Naive thymus-derived CD4-positive, alpha-beta T cell (primary cell): ENCODE measurements at regions of chr19 and their contacts with region 1.

Region 1: GRCh38 chr19:48321622-48322591 is 3.4 kb upstream of the EMP3 start:
- DNase-seq: peak; percentile 99 to 100 (median 100)
- ATAC-seq: peak; percentile 87
- H3K4me3 ChIP-seq: peak overlapping the region; percentile 79
- H3K4me3 Mint-ChIP-seq: peak overlapping the region; percentile 90 to 99 (median 96)
- H3K27ac ChIP-seq: peak overlapping the region; percentile 100
- H3K27ac Mint-ChIP-seq: peak overlapping the region; percentile 96 to 100 (median 99)
- H3K4me1 ChIP-seq: peaks cover 45 to 47% of the 10 kb centered on the region in 2 donors
- H3K4me1 Mint-ChIP-seq: peaks cover 36 to 63% (median 51%) of the 10 kb centered on the region in 7 donors
- H3K27me3 ChIP-seq: no peaks in the 10 kb centered on the region
- H3K27me3 Mint-ChIP-seq: peaks cover 0 to 2% (median 0%) of the 10 kb centered on the region in 5 donors

Region 2: DNA sequence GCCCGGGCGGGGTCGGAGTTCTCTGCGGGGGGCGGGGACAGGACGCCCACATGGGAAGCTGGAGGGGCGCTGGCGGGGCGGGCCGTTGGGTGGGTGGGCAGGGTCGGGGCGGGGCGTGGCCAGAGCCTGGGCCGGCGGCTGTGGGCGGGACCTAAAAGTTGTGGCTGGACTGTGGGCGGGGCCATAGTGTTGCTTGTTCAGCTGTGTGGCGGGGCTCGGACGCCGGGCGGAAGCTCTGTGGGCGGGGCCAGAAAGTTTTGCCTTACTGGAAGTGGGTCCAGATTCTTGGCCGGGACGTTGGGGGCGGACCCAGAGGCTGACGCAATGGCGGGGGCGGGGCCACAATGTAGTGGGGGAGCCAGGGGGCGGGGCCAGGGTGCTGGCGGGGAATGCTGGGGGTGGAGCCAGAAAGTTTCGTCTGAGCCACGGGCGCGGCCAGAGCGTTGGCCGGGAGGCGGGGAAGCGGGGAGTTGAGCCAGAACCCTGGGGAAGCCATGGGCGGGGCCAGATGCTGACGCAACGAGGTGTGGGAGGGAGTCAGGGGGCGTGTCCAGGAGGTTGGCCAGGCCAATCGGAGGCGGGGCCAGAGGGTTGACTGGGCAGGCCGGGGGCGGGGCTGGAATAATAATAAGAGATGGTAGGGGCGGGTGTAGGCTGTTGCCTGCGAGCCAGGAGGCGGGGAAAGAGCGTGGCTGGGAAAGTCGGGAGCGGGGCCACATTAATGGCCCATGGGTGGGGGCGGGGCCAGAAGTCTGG is 1065.0 kb before region 1 on chr19:
- CTCF ChIA-PET with region 1: no interaction called
- POLR2A ChIA-PET with region 1: no interaction called
- intact Hi-C with region 1: loop called (anchors 2 to 5 kb)
- DNase-seq: peak; percentile 94 to 100 (median 96)
- ATAC-seq: peak; percentile 88
- H3K4me3 ChIP-seq: peak overlapping the region; percentile 65
- H3K4me3 Mint-ChIP-seq: peak overlapping the region; percentile 85 to 97 (median 90)
- H3K27ac ChIP-seq: peak overlapping the region; percentile 90
- H3K27ac Mint-ChIP-seq: peak overlapping the region; percentile 90 to 99 (median 97)
- H3K4me1 ChIP-seq: peaks cover 15 to 24% of the 10 kb centered on the region in 2 donors
- H3K4me1 Mint-ChIP-seq: peaks cover 35 to 46% (median 39%) of the 10 kb centered on the region in 7 donors
- H3K27me3 ChIP-seq: no peaks in the 10 kb centered on the region
- H3K27me3 Mint-ChIP-seq: peaks cover 0 to 2% (median 0%) of the 10 kb centered on the region in 5 donors

Region 3: DNA sequence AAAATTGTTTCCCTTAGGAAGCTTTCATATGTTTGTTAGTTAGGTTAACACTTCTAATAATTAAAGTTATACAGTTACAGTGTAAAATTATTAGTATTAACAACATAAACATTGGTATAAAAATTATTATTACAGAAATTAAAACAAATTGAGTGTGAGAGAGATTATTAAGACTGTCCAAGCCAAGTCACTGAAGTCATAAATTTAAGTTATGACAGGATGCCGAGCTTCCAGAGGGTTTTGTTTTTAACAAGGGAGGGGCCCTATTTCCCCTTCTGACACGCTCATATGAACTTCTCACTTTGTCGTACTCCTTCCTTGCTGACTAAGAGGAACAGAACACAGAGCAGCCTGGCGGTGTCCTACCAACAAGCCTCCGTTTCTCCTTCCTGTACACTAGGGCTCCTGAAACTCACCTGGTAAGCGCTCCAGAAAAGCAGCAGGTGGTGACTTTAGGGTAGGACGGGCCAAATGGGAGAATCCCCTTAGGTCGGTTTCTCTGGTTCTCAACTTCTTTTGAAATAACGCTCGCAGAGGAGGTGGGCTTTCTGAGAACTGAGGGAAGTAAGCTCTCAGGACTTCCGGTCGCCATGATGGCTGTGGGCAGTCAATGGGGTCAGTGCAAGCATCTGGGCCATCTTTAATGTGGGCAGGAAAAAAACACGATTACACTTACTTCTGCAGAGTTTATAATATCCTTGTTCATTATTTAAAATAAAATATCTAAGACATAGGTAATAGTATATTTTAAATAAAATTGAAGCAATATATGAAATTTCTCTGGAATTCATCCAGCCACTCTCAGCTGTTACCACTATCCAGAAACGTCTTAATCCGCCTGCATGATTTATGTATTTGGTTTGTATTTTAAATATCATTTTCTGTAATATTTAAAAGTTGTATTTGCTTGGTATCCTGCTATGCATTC is 66.3 kb before region 1 on chr19 and contains the start of gene CARD8:
- CTCF ChIA-PET with region 1: no interaction called
- POLR2A ChIA-PET with region 1: interaction called, 6 read pairs
- intact Hi-C with region 1: loop called (anchors 2 kb)
- DNase-seq: peak; percentile 54 to 91 (median 84)
- ATAC-seq: peak; percentile 85
- H3K4me3 ChIP-seq: peak within 1 kb of the TSS; percentile 100
- H3K4me3 Mint-ChIP-seq: peak within 1 kb of the TSS; percentile 74 to 100 (median 99)
- H3K27ac ChIP-seq: peak within 1 kb of the TSS; percentile 88
- H3K27ac Mint-ChIP-seq: peak within 1 kb of the TSS; percentile 90 to 100 (median 97)
- H3K4me1 ChIP-seq: peaks cover 53 to 56% of the 10 kb centered on the region in 2 donors
- H3K4me1 Mint-ChIP-seq: peaks cover 51 to 86% (median 76%) of the 10 kb centered on the region in 7 donors
- H3K27me3 ChIP-seq: no peaks in the 10 kb centered on the region
- H3K27me3 Mint-ChIP-seq: no peaks in the 10 kb centered on the region
- total RNA-seq, gene CARD8: 104 to 301 (median 182) TPM

Region 4: GRCh38 chr19:48296963-48297734 is 24.8 kb before region 1 on chr19:
- CTCF ChIA-PET with region 1: no interaction called
- POLR2A ChIA-PET with region 1: no interaction called
- intact Hi-C with region 1: no loop called
- DNase-seq: no peak
- ATAC-seq: no peak
- H3K4me3 ChIP-seq: no peak overlapping the region
- H3K4me3 Mint-ChIP-seq: no peak overlapping the region
- H3K27ac ChIP-seq: no peak overlapping the region
- H3K27ac Mint-ChIP-seq: no peak overlapping the region
- H3K4me1 ChIP-seq: no peaks in the 10 kb centered on the region
- H3K4me1 Mint-ChIP-seq: no peaks in the 10 kb centered on the region
- H3K27me3 ChIP-seq: no peaks in the 10 kb centered on the region
- H3K27me3 Mint-ChIP-seq: peaks cover 0 to 5% (median 0%) of the 10 kb centered on the region in 5 donors

Region 5: DNA sequence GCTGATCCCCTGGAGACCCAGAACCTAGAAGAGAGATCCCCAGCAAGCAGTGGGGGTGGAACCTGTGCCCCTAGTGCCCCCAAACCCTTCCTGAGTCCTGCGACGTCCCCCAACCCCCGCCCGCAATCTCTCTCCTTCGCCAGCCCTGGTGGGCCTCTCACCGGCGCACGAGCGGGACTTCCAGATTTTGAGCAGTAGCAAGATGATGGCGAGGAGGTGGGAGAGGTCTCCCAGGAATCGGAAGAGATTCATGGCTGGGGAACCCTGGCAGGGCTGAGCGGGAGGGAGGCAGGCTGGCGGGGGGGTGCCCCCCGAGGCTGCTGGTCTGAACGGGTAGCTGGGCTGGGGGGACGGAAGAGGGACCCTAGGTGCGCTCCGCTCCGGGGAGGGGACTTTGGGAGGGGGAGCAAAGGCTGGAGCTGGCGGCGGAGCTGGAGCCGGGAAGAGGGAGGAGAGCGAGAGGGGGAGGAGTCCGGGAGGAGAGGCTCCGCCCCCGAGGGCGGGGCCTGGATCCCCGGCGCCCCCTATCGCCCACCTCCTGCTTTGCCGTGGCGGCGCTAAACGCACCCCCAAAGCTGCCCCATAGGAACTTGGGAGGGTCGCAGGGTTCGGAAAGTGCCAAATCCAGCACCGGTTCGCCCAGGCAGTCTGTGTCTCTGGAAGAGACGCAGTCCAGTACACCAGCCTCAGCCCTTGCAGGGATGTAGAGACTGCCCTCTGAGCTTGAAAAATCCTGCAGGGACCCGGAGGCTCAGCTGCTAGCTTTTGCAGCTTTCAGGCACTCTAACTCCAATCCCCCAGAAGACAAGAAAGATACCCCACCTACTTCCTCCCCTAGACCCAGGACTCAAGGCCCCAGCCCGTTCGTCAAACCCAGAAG is 69.4 kb after region 1 on chr19 and contains the start of gene KDELR1:
- CTCF ChIA-PET with region 1: no interaction called
- POLR2A ChIA-PET with region 1: interaction called, 5 read pairs
- intact Hi-C with region 1: loop called (anchors 2 kb)
- DNase-seq: peak; percentile 55 to 89 (median 72)
- ATAC-seq: peak; percentile 92
- H3K4me3 ChIP-seq: peak within 1 kb of the TSS; percentile 96
- H3K4me3 Mint-ChIP-seq: peak within 1 kb of the TSS; percentile 84 to 95 (median 92)
- H3K27ac ChIP-seq: peak within 1 kb of the TSS; percentile 92
- H3K27ac Mint-ChIP-seq: peak within 1 kb of the TSS; percentile 78 to 97 (median 93)
- H3K4me1 ChIP-seq: peaks cover 15 to 32% of the 10 kb centered on the region in 2 donors
- H3K4me1 Mint-ChIP-seq: peaks cover 5 to 46% (median 36%) of the 10 kb centered on the region in 7 donors
- H3K27me3 ChIP-seq: peaks cover 9 to 21% of the 10 kb centered on the region in 2 donors
- H3K27me3 Mint-ChIP-seq: peaks cover 9 to 42% (median 21%) of the 10 kb centered on the region in 5 donors
- total RNA-seq, gene KDELR1: 42.7 to 73.9 (median 52.3) TPM

Region 6: DNA sequence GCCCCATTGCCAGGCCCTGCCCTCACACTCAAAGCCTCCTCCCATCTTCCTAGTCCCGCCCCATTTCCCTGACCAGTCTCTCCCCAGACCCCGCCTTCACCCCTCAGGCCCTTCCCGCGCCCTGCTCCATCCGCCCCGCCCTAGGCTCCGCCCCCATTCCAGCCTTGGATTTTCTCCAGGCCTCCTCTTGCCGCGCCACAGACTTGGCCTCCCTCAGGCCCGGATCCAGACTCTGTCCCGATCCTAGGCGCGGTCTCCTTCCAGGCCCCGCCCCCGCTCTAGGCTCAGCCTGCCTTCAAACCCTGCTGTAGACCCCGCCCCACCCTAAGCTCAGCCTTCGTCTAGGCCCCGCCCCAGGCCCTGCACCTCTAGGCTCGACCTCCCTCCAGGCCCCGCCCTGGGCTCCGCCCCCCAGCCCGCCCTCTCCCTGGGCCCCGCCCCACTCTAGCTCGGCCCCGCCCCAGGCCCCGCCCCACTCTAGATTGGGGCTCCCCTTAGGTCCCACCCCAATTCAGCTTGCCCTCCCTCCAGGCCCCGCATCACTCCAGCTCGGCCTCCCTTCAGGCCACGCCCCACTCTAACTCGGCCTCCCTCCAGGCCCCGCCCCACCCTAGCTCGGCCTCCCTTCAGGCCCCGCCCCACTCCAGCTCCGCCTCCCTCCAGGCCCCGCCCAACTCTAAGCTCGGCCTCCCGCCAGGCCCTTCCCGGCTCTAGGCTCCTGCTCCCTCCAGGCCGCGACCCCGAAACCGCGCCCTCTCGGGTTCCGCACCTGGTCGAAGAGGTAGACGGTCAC is 171.2 kb after region 1 on chr19:
- CTCF ChIA-PET with region 1: no interaction called
- POLR2A ChIA-PET with region 1: no interaction called
- intact Hi-C with region 1: loop called (anchors 2 kb)
- DNase-seq: peak; percentile 69 to 87 (median 78)
- ATAC-seq: peak; percentile 87
- H3K4me3 ChIP-seq: peak overlapping the region; percentile 41
- H3K4me3 Mint-ChIP-seq: peak overlapping the region; percentile 58 to 84 (median 72)
- H3K27ac ChIP-seq: no peak overlapping the region
- H3K27ac Mint-ChIP-seq: peak overlapping the region; percentile 20 to 86 (median 67)
- H3K4me1 ChIP-seq: peaks cover 4 to 25% of the 10 kb centered on the region in 2 donors
- H3K4me1 Mint-ChIP-seq: peaks cover 17 to 51% (median 43%) of the 10 kb centered on the region in 7 donors
- H3K27me3 ChIP-seq: no peaks in the 10 kb centered on the region
- H3K27me3 Mint-ChIP-seq: peaks cover 0 to 57% (median 6%) of the 10 kb centered on the region in 5 donors

Region 7: DNA sequence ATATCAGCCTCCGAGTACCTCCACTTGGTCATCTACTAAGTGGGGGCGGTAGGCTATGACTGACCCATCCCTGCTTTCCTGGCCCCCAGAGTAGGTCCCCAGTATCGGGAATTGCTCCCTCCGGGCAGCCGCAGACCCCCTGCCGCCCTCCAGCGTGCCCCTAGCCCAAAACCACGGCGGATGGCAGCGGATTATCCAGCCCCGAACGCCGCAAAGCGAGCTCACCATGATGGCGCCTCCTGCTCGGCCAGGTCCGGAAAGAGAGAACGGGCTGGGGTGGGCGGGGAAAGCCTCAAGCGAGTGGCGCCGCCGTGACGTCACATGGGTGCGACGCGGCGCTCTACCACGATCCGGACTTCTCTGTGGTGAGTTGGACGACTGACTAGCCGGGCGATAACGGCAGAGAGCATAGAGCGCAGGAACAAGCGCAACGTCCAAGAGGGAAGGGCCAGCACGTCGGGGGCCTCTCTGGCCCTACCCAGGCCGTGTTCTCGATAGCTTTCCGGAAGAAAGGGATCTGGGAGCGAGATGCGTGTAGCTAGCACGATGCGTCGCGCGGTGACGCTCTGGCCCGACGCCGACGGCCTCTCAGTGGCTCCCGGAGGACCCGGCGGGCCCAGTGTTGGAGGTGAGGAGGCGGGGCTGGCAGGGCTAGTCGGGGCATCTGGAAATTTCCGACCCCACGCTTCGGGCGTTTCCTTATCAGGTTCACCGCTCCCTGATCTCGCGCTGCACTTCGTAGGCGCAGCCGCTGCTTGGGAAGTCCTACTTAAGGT is 297.2 kb after region 1 on chr19 and contains the starts of genes RPL18 and SPHK2:
- CTCF ChIA-PET with region 1: no interaction called
- POLR2A ChIA-PET with region 1: interaction called, 4 read pairs
- intact Hi-C with region 1: loop called in 1 of 2 experiments (anchors 1 kb)
- DNase-seq: peak; percentile 89 to 97 (median 95)
- ATAC-seq: peak; percentile 89
- H3K4me3 ChIP-seq: peak within 1 kb of the TSS; percentile 96
- H3K4me3 Mint-ChIP-seq: peak within 1 kb of the TSS; percentile 88 to 99 (median 96)
- H3K27ac ChIP-seq: peak within 1 kb of the TSS; percentile 95
- H3K27ac Mint-ChIP-seq: peak within 1 kb of the TSS; percentile 96 to 99 (median 98)
- H3K4me1 ChIP-seq: peaks cover 26 to 45% of the 10 kb centered on the region in 2 donors
- H3K4me1 Mint-ChIP-seq: peaks cover 40 to 64% (median 54%) of the 10 kb centered on the region in 7 donors
- H3K27me3 ChIP-seq: no peaks in the 10 kb centered on the region
- H3K27me3 Mint-ChIP-seq: no peaks in the 10 kb centered on the region
- total RNA-seq, gene RPL18: 1,570 to 2,826 (median 2,745) TPM
- total RNA-seq, gene SPHK2: 20.1 to 34.7 (median 30.5) TPM